Lower leg skin (tissue), 4 donors: ENCODE measurements at regions of chr1 and their contacts with region 1.

Region 1: DNA sequence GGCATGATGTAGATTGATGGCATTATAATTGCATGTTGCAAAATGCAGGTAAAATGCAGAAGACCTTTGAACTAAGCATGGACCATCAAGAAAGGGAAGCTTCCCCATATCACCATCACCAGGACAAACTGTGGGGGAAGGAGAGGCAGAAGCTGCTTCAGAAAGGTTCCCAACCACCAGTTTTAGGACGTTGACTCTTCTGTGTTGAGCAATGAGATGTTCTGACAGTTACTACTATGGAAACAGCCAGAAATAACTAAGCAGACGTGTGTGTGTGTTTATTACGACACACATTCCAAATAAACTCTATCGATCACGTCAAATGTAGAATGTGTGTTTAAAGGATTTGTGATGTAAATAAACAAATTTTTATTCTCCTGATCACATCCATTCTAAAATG is 110.2 kb upstream of the PLD5 start:
- DNase-seq: no peak
- H3K4me3 ChIP-seq: no peak overlapping the region
- CTCF ChIP-seq: no peak
- POLR2A ChIP-seq: no peak

Region 2: GRCh38 chr1:242651817-242652216 is 17.1 kb after region 1 on chr1:
- intact Hi-C with region 1: loop called (anchors 1 kb)
- DNase-seq: no peak
- H3K4me3 ChIP-seq: no peak overlapping the region
- CTCF ChIP-seq: no peak
- POLR2A ChIP-seq: no peak

Region 3: GRCh38 chr1:242690849-242691602 is 56.3 kb after region 1 on chr1:
- intact Hi-C with region 1: no loop called
- DNase-seq: no peak
- H3K4me3 ChIP-seq: no peak overlapping the region
- CTCF ChIP-seq: no peak
- POLR2A ChIP-seq: no peak